ENCODE measurements at regions of chr6 and their contacts with region 1.

Region 1: GRCh38 chr6:13574149-13574570 is 241 bp upstream of the SIRT5 start:
- DNase-seq: peak; percentile 82
- ATAC-seq: peak; percentile 89
- H3K4me3 ChIP-seq: peak overlapping the region; percentile 93
- H3K27ac ChIP-seq: peak overlapping the region; percentile 96
- H3K4me1 ChIP-seq: peaks cover 4% of the 10 kb centered on the region
- H3K27me3 ChIP-seq: no peaks in the 10 kb centered on the region
- CTCF ChIP-seq: peak; percentile 41 to 63 (median 50); a peak in 4 of 6 replicates
- EP300 ChIP-seq: peak in 1 of 2 experiments; percentile 45; a peak in 1 of 4 replicates
- POLR2A ChIP-seq: peak; percentile 72; the same call in 1 of the 2 replicates
- RAD21 ChIP-seq: peak; percentile 46; the same call in 1 of the 2 replicates

Region 2: GRCh38 chr6:13012977-13013680 is 561.0 kb before region 1 on chr6:
- CTCF ChIA-PET with region 1: no interaction called
- POLR2A ChIA-PET with region 1: no interaction called
- RAD21 ChIA-PET with region 1: no interaction called
- SMC1A ChIA-PET with region 1: no interaction called
- in situ Hi-C with region 1: no loop called
- intact Hi-C with region 1: no loop called
- DNase-seq: no peak
- ATAC-seq: no peak
- H3K4me3 ChIP-seq: no peak overlapping the region
- H3K27ac ChIP-seq: no peak overlapping the region
- H3K4me1 ChIP-seq: no peaks in the 10 kb centered on the region
- H3K27me3 ChIP-seq: peaks cover 5% of the 10 kb centered on the region in 2 experiments
- CTCF ChIP-seq: no peak
- EP300 ChIP-seq: no peak
- POLR2A ChIP-seq: no peak
- RAD21 ChIP-seq: no peak

Region 3: GRCh38 chr6:13328076-13328874 is 245.9 kb before region 1 on chr6 and contains the start of gene TBC1D7:
- CTCF ChIA-PET with region 1: interaction called, 24 read pairs
- POLR2A ChIA-PET with region 1: no interaction called
- RAD21 ChIA-PET with region 1: interaction called, 14 read pairs
- SMC1A ChIA-PET with region 1: interaction called, 11 read pairs
- in situ Hi-C with region 1: no loop called
- intact Hi-C with region 1: no loop called
- DNase-seq: peak; percentile 63
- ATAC-seq: peak; percentile 91
- H3K4me3 ChIP-seq: peak within 1 kb of the TSS; percentile 90
- H3K27ac ChIP-seq: peak within 1 kb of the TSS; percentile 87
- H3K4me1 ChIP-seq: peaks cover 5% of the 10 kb centered on the region; the same call in 1 of the 2 replicates
- H3K27me3 ChIP-seq: no peaks in the 10 kb centered on the region
- CTCF ChIP-seq: 0 out of 6 replicates have a peak, but pooled peaks of 1 of the 3 experiments have one; percentile 1
- EP300 ChIP-seq: no peak
- POLR2A ChIP-seq: peak; percentile 92
- RAD21 ChIP-seq: no peak
- polyA plus RNA-seq, gene TBC1D7: 36.5 to 39.3 TPM

Region 4: GRCh38 chr6:13355043-13355951 is 218.9 kb before region 1 on chr6:
- CTCF ChIA-PET with region 1: interaction called, 12 read pairs
- POLR2A ChIA-PET with region 1: no interaction called
- RAD21 ChIA-PET with region 1: interaction called, 14 read pairs
- SMC1A ChIA-PET with region 1: interaction called, 4 read pairs
- in situ Hi-C with region 1: no loop called
- intact Hi-C with region 1: no loop called
- DNase-seq: peak; percentile 66
- ATAC-seq: peak; percentile 79
- H3K4me3 ChIP-seq: peak overlapping the region; percentile 58
- H3K27ac ChIP-seq: peak overlapping the region; percentile 94
- H3K4me1 ChIP-seq: peaks cover 36% of the 10 kb centered on the region
- H3K27me3 ChIP-seq: no peaks in the 10 kb centered on the region
- CTCF ChIP-seq: no peak
- EP300 ChIP-seq: 0 out of 4 replicates have a peak, but pooled peaks of 1 of the 2 experiments have one; percentile 25
- POLR2A ChIP-seq: no peak
- RAD21 ChIP-seq: no peak

Region 5: GRCh38 chr6:13383328-13384163 is 190.6 kb before region 1 on chr6:
- CTCF ChIA-PET with region 1: interaction called, 45 read pairs
- POLR2A ChIA-PET with region 1: interaction called, 4 read pairs
- RAD21 ChIA-PET with region 1: interaction called, 31 read pairs
- SMC1A ChIA-PET with region 1: interaction called, 15 read pairs
- in situ Hi-C with region 1: no loop called
- intact Hi-C with region 1: loop called (anchors 2 kb)
- DNase-seq: peak; percentile 91
- ATAC-seq: peak; percentile 98
- H3K4me3 ChIP-seq: no peak overlapping the region
- H3K27ac ChIP-seq: peak overlapping the region; percentile 93
- H3K4me1 ChIP-seq: peaks cover 45% of the 10 kb centered on the region
- H3K27me3 ChIP-seq: no peaks in the 10 kb centered on the region
- CTCF ChIP-seq: peak; percentile 40 to 67 (median 48); a peak in 5 of 6 replicates
- EP300 ChIP-seq: peak in 1 of 2 experiments; percentile 54; a peak in 2 of 4 replicates
- POLR2A ChIP-seq: no peak
- RAD21 ChIP-seq: peak; percentile 83

Region 6: DNA sequence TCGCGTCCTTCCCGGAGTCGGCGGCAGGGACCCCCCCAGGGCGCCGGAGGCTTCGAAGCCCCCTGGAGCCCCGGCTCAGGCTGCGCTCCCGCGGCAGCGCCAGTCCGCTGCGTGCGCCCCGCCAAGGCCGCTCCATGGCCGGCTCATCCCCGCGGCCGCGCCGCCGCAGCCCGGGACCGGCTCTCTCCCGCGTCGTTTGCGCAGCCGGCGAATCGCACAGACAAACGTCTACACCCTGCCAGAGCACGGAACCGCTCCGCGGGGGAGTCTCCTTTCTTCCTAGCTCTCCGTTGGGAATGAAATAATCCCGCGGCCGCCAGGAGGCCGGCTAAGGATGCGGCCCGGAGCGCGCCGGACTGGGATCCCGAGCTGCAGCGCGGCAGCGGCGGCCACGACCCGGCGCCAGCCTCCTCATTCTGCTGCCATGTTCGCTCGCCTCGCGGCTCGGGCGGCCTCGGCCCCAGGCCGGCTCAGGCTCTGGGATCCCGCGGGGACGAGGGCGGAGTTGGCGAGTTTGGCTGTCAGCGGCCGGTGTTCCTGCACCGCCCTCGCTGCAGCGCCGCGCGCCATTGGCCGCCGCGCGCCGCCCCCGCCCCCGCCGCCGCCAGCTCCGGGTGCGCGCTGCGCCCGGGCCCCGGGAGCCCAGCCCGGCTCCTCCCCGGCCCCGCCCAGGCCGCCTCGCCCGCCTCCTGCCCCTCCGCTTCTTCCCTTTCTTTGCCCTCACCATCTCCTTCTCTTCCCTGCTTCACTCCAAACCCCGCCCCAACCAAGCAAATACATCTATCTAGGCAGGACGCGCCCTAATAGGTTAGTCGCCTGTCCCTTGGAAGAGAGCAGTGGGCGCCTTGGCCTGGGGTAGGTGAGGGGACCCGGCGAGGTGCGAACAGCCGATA is 86.8 kb before region 1 on chr6 and contains the start of gene GFOD1:
- CTCF ChIA-PET with region 1: interaction called, 30 read pairs
- POLR2A ChIA-PET with region 1: interaction called, 8 read pairs
- RAD21 ChIA-PET with region 1: interaction called, 11 read pairs
- SMC1A ChIA-PET with region 1: interaction called, 16 read pairs
- in situ Hi-C with region 1: no loop called
- intact Hi-C with region 1: loop called (anchors 2 kb)
- DNase-seq: no peak
- ATAC-seq: peak; percentile 80
- H3K4me3 ChIP-seq: peak within 1 kb of the TSS; percentile 100
- H3K27ac ChIP-seq: peak within 1 kb of the TSS; percentile 69
- H3K4me1 ChIP-seq: peaks cover 15% of the 10 kb centered on the region
- H3K27me3 ChIP-seq: no peaks in the 10 kb centered on the region
- CTCF ChIP-seq: no peak
- EP300 ChIP-seq: no peak
- POLR2A ChIP-seq: peak; percentile 86
- RAD21 ChIP-seq: no peak
- polyA plus RNA-seq, gene GFOD1: 6.5 to 7.9 TPM

Region 7: GRCh38 chr6:13561624-13562267 is 12.4 kb before region 1 on chr6:
- CTCF ChIA-PET with region 1: interaction called, 28 read pairs
- POLR2A ChIA-PET with region 1: no interaction called
- RAD21 ChIA-PET with region 1: interaction called, 6 read pairs
- SMC1A ChIA-PET with region 1: interaction called, 5 read pairs
- in situ Hi-C with region 1: no loop called
- intact Hi-C with region 1: no loop called
- DNase-seq: no peak
- ATAC-seq: no peak
- H3K4me3 ChIP-seq: no peak overlapping the region
- H3K27ac ChIP-seq: no peak overlapping the region
- H3K4me1 ChIP-seq: no peaks in the 10 kb centered on the region
- H3K27me3 ChIP-seq: no peaks in the 10 kb centered on the region
- CTCF ChIP-seq: no peak
- EP300 ChIP-seq: no peak
- POLR2A ChIP-seq: no peak
- RAD21 ChIP-seq: no peak

Region 8: DNA sequence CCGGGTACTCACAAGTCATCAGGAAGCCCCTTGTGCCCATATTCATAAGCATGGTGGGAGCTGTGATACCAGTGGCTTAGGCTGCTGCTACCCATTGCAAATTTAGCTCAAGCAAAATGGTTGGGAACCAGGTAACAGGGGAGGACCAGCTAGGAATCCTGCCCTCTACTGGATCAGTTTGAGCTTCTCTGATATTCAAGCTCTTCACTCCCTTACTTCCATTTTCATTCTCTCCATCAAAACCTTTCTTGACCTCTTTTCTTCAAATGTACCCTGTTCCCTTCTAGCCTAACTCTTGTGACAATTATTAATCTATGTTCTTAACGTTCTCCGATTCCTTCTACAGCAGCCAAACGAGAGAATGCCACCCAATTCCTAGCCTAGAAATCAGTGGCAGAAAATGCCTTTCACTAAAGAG is 50.7 kb after region 1 on chr6:
- CTCF ChIA-PET with region 1: interaction called, 14 read pairs
- POLR2A ChIA-PET with region 1: interaction called, 3 read pairs
- RAD21 ChIA-PET with region 1: interaction called, 9 read pairs
- SMC1A ChIA-PET with region 1: interaction called, 4 read pairs
- in situ Hi-C with region 1: no loop called
- intact Hi-C with region 1: no loop called
- DNase-seq: no peak
- ATAC-seq: peak; percentile 94
- H3K4me3 ChIP-seq: no peak overlapping the region
- H3K27ac ChIP-seq: no peak overlapping the region
- H3K4me1 ChIP-seq: no peaks in the 10 kb centered on the region
- H3K27me3 ChIP-seq: no peaks in the 10 kb centered on the region
- CTCF ChIP-seq: peak; percentile 46 to 67 (median 62)
- EP300 ChIP-seq: no peak
- POLR2A ChIP-seq: no peak
- RAD21 ChIP-seq: peak; percentile 34

Region 9: DNA sequence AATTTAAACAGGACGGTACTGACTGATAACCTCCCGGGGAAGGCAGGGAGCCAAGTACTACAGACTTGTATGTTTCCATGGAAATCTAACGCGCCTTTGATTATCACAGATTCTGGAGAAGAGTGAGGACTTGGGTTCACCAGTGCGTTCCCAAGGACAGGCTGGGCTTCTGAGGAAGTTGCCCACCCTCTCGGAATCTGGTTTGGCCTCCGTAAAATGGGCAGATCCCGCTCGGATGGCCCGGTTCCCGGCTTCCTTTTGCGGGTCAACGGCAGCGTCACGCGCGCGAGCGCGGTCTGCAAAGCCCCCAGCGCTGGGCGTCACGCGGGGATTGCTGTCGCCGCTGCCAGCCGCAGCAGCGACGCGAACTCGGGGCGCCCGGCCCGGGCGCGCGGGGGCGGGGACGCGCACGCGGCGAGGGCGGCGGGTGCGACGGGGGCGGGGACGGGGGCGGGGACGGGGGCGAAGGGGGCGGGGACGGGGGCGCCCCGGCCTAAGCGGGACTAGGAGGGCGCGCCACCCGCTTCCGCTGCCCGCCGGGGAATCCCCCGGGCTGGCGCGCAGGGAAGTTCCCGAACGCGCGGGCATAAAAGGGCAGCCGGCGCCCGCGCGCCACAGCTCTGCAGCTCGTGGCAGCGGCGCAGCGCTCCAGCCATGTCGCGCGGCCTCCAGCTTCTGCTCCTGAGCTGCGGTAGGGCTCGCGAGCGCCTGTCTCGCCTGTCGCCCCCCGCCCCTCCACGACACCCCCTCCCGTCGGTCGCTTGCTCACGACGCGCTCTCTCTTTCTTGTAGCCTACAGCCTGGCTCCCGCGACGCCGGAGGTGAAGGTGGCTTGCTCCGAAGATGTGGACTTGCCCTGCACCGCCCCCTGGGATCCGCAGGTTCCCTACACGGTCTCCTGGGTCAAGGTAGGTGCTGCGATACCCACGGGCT is 543.3 kb after region 1 on chr6 and contains the start of gene CD83:
- CTCF ChIA-PET with region 1: no interaction called
- POLR2A ChIA-PET with region 1: no interaction called
- RAD21 ChIA-PET with region 1: no interaction called
- SMC1A ChIA-PET with region 1: no interaction called
- in situ Hi-C with region 1: no loop called
- intact Hi-C with region 1: no loop called
- DNase-seq: no peak
- ATAC-seq: peak; percentile 68
- H3K4me3 ChIP-seq: peak within 1 kb of the TSS; percentile 93
- H3K27ac ChIP-seq: peak within 1 kb of the TSS; percentile 78
- H3K4me1 ChIP-seq: peaks cover 14% of the 10 kb centered on the region
- H3K27me3 ChIP-seq: no peaks in the 10 kb centered on the region
- CTCF ChIP-seq: peak in 2 of 3 experiments; percentile 11 to 34; a peak in 2 of 6 replicates
- EP300 ChIP-seq: peak in 1 of 2 experiments; percentile 42; a peak in 1 of 4 replicates
- POLR2A ChIP-seq: peak; percentile 100
- RAD21 ChIP-seq: peak; percentile 35
- polyA plus RNA-seq, gene CD83: 120 to 174 TPM